Gastrocnemius medialis (tissue), 4 donors: ENCODE measurements at regions of chr2 and their contacts with region 1.

Region 1: GRCh38 chr2:151619337-151619989 is 114.8 kb downstream of the NEB start:
- DNase-seq: no peak
- ATAC-seq: peak in 1 of 2 donors; percentile 45
- H3K4me3 ChIP-seq: no peak overlapping the region
- H3K27ac ChIP-seq: peak overlapping the region in 3 of 4 donors; percentile 13 to 54 (median 51)
- H3K4me1 ChIP-seq: peaks cover 0 to 11% of the 10 kb centered on the region in 2 donors
- H3K27me3 ChIP-seq: no peaks in the 10 kb centered on the region
- CTCF ChIP-seq: no peak
- POLR2A ChIP-seq: no peak

Region 2: GRCh38 chr2:151334082-151334815 is 285.2 kb before region 1 on chr2:
- in situ Hi-C with region 1: no loop called
- intact Hi-C with region 1: no loop called
- DNase-seq: no peak
- ATAC-seq: peak; percentile 61 to 69
- H3K4me3 ChIP-seq: no peak overlapping the region
- H3K27ac ChIP-seq: peak overlapping the region in 1 of 4 donors; percentile 27
- H3K4me1 ChIP-seq: peaks cover 0 to 2% of the 10 kb centered on the region in 2 donors
- H3K27me3 ChIP-seq: no peaks in the 10 kb centered on the region
- CTCF ChIP-seq: no peak
- POLR2A ChIP-seq: no peak

Region 3: GRCh38 chr2:151508519-151508918 is 110.9 kb before region 1 on chr2:
- in situ Hi-C with region 1: no loop called
- intact Hi-C with region 1: loop called (anchors 5 kb)
- DNase-seq: no peak
- ATAC-seq: peak; percentile 5 to 20
- H3K4me3 ChIP-seq: no peak overlapping the region
- H3K27ac ChIP-seq: peak overlapping the region in 3 of 4 donors; percentile 63 to 71 (median 67)
- H3K4me1 ChIP-seq: no peaks in the 10 kb centered on the region
- H3K27me3 ChIP-seq: no peaks in the 10 kb centered on the region
- CTCF ChIP-seq: no peak
- POLR2A ChIP-seq: no peak

Region 4: DNA sequence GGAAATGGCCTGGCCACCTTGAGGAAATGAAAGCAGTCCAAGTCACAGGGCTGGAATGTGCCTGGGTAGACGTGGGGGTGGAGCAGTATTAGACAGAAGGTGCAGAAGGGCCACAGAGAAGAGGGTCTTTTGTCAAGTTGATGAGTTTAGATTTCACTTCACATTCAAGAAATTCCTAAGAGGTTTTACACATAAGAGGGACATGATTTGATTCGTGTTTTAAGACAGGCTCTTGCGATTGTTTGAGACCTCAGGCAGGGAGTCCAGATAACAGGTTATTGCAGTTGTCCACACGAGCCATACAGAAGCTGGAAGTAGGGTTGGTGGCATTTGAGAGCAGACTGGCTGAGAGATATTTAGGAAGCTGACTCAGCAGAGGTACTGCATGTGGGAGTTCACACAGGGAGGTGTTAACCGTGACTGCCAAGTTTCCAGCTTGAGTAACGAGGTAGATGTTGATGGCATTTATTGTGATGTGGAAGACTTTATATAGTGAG is 50.2 kb after region 1 on chr2:
- in situ Hi-C with region 1: no loop called
- intact Hi-C with region 1: loop called (anchors 5 kb)
- DNase-seq: peak; percentile 32 to 60
- ATAC-seq: peak; percentile 76 to 81
- H3K4me3 ChIP-seq: no peak overlapping the region
- H3K27ac ChIP-seq: peak overlapping the region in 3 of 4 donors; percentile 60 to 80 (median 64)
- H3K4me1 ChIP-seq: peaks cover 15 to 25% of the 10 kb centered on the region in 2 donors
- H3K27me3 ChIP-seq: no peaks in the 10 kb centered on the region
- CTCF ChIP-seq: no peak
- POLR2A ChIP-seq: no peak

Region 5: GRCh38 chr2:151681051-151681450 is 61.6 kb after region 1 on chr2:
- in situ Hi-C with region 1: no loop called
- intact Hi-C with region 1: loop called (anchors 5 kb)
- DNase-seq: no peak
- ATAC-seq: no peak
- H3K4me3 ChIP-seq: no peak overlapping the region
- H3K27ac ChIP-seq: peak overlapping the region in 1 of 4 donors; percentile 8
- H3K4me1 ChIP-seq: peaks cover 0 to 17% of the 10 kb centered on the region in 2 donors
- H3K27me3 ChIP-seq: no peaks in the 10 kb centered on the region
- CTCF ChIP-seq: no peak
- POLR2A ChIP-seq: no peak

Region 6: DNA sequence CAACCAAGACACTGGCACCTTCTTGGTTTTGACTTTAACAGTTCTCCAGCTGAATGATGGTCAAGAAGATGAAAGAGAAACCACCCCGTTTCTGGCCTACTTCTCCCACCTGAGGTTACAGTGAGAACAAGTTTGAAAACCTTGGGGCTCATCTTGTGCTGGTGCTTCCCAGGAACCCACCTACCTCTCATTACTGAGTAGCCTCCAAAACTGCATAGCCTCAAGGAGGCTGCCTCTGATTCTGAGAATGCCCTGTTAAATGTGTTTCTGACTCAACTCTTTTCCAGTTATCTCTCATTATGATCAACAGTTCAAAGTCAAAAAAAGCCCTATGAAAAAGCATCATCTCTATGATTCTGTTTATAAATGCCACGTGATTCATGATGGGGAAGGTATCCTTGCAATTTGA is 357.5 kb after region 1 on chr2:
- in situ Hi-C with region 1: no loop called
- intact Hi-C with region 1: no loop called
- DNase-seq: no peak
- ATAC-seq: no peak
- H3K4me3 ChIP-seq: no peak overlapping the region
- H3K27ac ChIP-seq: no peak overlapping the region
- H3K4me1 ChIP-seq: no peaks in the 10 kb centered on the region
- H3K27me3 ChIP-seq: no peaks in the 10 kb centered on the region
- CTCF ChIP-seq: no peak
- POLR2A ChIP-seq: no peak

Region 7: GRCh38 chr2:152012697-152013096 is 393.2 kb after region 1 on chr2:
- in situ Hi-C with region 1: loop called in 2 of 4 experiments (anchors 25 kb)
- intact Hi-C with region 1: no loop called
- DNase-seq: no peak
- ATAC-seq: no peak
- H3K4me3 ChIP-seq: no peak overlapping the region
- H3K27ac ChIP-seq: no peak overlapping the region
- H3K4me1 ChIP-seq: no peaks in the 10 kb centered on the region
- H3K27me3 ChIP-seq: no peaks in the 10 kb centered on the region
- CTCF ChIP-seq: no peak
- POLR2A ChIP-seq: no peak